A549 (cell line): ENCODE measurements at regions of chr17 and their contacts with region 1.

Region 1: DNA sequence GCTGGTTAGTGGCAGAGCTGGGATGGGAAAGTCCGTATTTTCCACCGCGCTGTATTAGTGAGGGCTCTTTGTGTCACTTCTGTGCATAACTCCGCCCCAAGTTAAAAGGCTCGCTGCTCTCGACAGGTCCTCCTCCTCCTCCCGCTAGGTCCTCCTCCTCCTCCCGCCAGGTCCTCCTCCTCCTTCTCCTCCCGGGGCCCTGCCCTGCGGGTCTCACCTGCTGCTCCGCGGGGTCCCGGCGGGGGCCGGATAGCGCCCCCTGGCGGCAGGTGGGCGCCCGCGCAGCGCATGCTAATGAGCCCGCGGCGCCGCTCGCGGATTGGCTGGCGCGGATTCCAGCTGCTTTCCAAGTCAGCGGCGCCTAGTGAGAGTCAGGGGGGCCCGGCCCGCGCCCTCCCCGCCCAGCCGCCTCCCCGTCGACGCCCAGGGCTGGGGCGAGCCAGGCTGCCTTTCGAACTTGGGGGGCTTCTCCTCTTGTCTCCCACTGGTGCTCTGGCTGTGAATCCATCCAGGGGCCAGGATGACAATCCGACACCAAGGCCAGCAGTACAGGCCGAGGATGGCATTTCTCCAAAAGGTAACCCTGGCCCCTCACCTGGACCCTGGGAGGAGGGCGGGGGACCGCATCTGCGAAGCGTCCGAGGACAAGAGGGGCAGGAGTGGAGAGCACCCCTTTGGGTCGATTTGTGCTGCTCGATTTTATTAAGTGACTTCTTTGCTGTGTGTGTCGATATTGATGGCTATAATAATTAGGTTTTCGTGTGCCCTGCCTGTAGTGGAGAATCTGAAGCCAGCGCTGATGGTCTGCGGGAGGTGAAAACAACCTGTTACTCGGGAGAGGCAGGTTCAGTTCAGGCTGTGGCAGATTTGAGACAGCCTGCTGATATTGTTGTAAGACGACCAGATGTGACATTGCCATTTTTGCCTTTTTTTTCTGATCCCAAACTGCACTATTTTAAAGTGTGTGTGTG is at the start of gene RGS9:
- DNase-seq: peak; percentile 77 to 87
- ATAC-seq: peak; percentile 93 to 97
- H3K4me3 ChIP-seq: peak within 1 kb of the TSS; percentile 39
- H3K27ac ChIP-seq: peak within 1 kb of the TSS; percentile 40 to 61
- H3K4me1 ChIP-seq: no peaks in the 10 kb centered on the region
- CTCF ChIP-seq: peak; percentile 99
- EP300 ChIP-seq: no peak
- POLR2A ChIP-seq: no peak
- RAD21 ChIP-seq: peak; percentile 65 to 84
- polyA plus RNA-seq, gene RGS9: 11.2 and 14.3 TPM in 2 replicates

Region 2: GRCh38 chr17:65064452-65065019 is 72.8 kb before region 1 on chr17:
- CTCF ChIA-PET with region 1: interaction called, 10 read pairs
- POLR2A ChIA-PET with region 1: no interaction called
- DNase-seq: peak; percentile 32 to 86
- ATAC-seq: peak; percentile 67 to 76
- H3K4me3 ChIP-seq: no peak overlapping the region
- H3K27ac ChIP-seq: peak overlapping the region; percentile 70 to 89
- H3K4me1 ChIP-seq: peaks cover 56% of the 10 kb centered on the region
- CTCF ChIP-seq: no peak
- EP300 ChIP-seq: peak; percentile 22 to 40; a peak in 2 of 5 replicates
- POLR2A ChIP-seq: no peak
- RAD21 ChIP-seq: no peak

Region 3: DNA sequence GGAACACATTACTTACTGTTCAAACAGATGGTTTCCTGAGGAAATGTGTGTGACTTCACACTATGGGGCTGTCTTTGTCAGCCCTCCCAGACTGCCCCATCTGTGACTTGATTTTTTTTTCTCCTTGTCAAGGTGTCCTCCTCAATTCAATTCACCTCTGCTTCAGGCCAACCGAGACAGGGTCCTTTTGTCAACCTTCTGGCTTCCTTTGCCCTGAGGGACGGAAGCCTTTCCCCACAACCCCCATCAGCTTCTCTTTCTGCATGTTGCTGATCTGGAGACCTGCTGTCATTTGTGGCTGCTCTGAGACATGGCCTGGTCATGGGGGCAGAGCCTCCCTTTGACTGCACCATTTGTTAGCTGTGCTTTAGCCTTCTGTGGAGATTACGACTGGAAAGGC is 21.5 kb before region 1 on chr17:
- CTCF ChIA-PET with region 1: interaction called, 30 read pairs
- POLR2A ChIA-PET with region 1: no interaction called
- DNase-seq: no peak
- ATAC-seq: no peak
- H3K4me3 ChIP-seq: no peak overlapping the region
- H3K27ac ChIP-seq: no peak overlapping the region
- H3K4me1 ChIP-seq: no peaks in the 10 kb centered on the region
- CTCF ChIP-seq: no peak
- EP300 ChIP-seq: no peak
- POLR2A ChIP-seq: no peak
- RAD21 ChIP-seq: no peak

Region 4: DNA sequence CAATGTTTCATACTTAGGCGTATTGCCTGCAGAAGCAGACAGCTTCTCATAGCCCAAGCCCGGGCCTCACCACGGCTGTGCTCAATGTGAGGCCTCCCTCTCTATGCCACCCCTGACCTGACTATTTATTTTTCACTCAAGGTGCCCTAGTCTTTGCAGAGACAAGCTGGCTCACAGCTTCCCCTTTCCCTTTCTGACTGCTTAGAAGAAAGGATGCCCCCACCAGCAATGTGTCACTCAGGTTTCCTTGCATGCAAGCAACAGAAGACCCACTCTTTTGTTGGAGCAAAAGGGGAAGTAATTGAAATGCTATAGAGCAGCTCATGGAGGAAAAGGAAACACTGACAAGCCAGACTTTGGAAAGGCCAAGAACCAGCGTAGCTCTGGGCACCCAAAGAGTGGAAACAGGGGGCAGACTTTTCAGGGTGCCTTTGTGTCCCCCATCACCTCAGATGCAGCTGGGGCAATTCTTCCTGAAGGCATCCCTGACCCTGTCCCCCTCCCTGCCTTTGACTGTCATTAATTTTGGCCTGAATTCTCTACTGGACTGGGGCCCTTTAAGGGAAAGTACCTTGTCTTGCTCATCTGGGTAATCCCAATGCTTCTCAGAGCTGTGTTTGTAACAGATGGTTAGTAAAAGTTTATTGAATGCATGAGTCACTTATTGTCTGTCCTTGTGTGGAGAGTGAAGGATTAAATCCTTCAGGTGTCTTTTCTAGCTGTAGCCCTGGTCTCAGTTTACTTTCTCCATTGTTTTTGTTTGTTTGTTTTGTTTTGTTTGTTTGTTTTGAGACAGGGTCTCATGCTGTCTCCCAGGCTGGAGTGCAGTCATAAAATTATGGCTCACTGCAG is 17.7 kb after region 1 on chr17:
- CTCF ChIA-PET with region 1: interaction called, 158 read pairs
- POLR2A ChIA-PET with region 1: interaction called, 3 read pairs
- DNase-seq: peak; percentile 38 to 69
- ATAC-seq: peak; percentile 55 to 77; a peak in 4 of 6 replicates
- H3K4me3 ChIP-seq: no peak overlapping the region
- H3K27ac ChIP-seq: no peak overlapping the region
- H3K4me1 ChIP-seq: peaks cover 15% of the 10 kb centered on the region
- CTCF ChIP-seq: no peak
- EP300 ChIP-seq: no peak
- POLR2A ChIP-seq: no peak
- RAD21 ChIP-seq: no peak

Region 5: GRCh38 chr17:65173284-65173793 is 36.0 kb after region 1 on chr17:
- CTCF ChIA-PET with region 1: interaction called, 12 read pairs
- POLR2A ChIA-PET with region 1: no interaction called
- DNase-seq: peak; percentile 39 to 75
- ATAC-seq: peak; percentile 57 to 83
- H3K4me3 ChIP-seq: no peak overlapping the region
- H3K27ac ChIP-seq: peak overlapping the region; percentile 8 to 14; a peak in 2 of 6 replicates
- H3K4me1 ChIP-seq: peaks cover 20% of the 10 kb centered on the region
- CTCF ChIP-seq: no peak
- EP300 ChIP-seq: no peak
- POLR2A ChIP-seq: no peak
- RAD21 ChIP-seq: no peak

Region 6: GRCh38 chr17:65198653-65199382 is 61.5 kb after region 1 on chr17:
- CTCF ChIA-PET with region 1: interaction called, 17 read pairs
- POLR2A ChIA-PET with region 1: no interaction called
- DNase-seq: peak; percentile 73 to 97
- ATAC-seq: peak; percentile 25 to 71; a peak in 4 of 6 replicates
- H3K4me3 ChIP-seq: no peak overlapping the region
- H3K27ac ChIP-seq: no peak overlapping the region
- H3K4me1 ChIP-seq: peaks cover 3% of the 10 kb centered on the region; the same call in 2 of the 3 replicates
- CTCF ChIP-seq: peak; percentile 97
- EP300 ChIP-seq: no peak
- POLR2A ChIP-seq: no peak
- RAD21 ChIP-seq: peak; percentile 95 to 97